GM10248 (cell line): ENCODE measurements at regions of chr10 and their contacts with region 1.

Region 1: DNA sequence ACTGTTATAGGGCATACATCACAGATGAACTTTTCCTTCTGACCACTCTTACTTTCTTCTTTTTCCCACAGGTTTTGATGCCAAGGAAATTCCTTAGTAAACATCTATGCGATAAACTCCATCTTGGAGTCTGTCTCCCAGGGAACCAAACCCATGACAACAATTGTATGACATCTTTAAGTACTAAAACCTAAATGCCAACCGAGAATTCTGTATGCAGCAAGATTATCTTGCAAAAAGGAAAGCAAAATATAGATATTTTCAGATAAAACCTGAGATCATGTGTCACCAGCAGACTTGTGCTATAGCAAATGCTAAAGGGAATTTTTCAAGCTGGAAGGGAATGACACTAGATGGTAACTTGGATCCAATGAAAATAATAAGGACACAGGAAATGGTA is 22.0 kb upstream of the BEND7 start:
- DNase-seq: no peak
- CTCF ChIP-seq: no peak

Region 2: GRCh38 chr10:13536674-13537366 is 14.0 kb before region 1 on chr10:
- CTCF ChIA-PET with region 1: interaction called, 18 read pairs
- POLR2A ChIA-PET with region 1: no interaction called
- DNase-seq: peak; percentile 62
- CTCF ChIP-seq: peak; percentile 58

Region 3: DNA sequence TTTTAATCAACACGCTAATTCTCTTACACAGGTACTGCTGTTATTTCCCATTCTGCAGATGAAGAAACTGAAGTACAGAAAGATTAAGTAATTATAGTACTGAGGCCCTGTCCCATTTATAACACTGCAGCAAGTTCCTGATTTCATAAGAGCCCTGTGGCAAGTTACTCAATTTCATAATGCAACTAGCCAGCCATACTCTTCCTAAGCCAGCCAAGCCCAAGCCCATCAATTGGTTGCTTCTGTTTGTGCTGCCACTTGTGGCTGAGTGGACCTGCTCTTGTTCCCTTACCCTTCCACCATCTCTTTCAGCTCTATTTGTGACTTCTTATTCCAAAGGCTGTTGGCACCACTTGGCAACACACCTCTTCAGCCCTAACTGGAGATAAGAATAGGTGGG is 16.2 kb after region 1 on chr10:
- CTCF ChIA-PET with region 1: no interaction called
- POLR2A ChIA-PET with region 1: no interaction called
- DNase-seq: no peak
- CTCF ChIP-seq: no peak